Sigmoid colon (tissue), 7 donors: ENCODE measurements at regions of chr1 and their contacts with region 1.

Region 1: GRCh38 chr1:182084487-182085316 is 23.2 kb upstream of the ZNF648 start:
- DNase-seq: peak; percentile 93
- H3K4me3 ChIP-seq: no peak overlapping the region
- H3K27ac ChIP-seq: peak overlapping the region in 2 of 4 donors; percentile 45 to 50
- H3K4me1 ChIP-seq: peaks cover 0 to 9% (median 3%) of the 10 kb centered on the region in 4 donors
- H3K27me3 ChIP-seq: no peaks in the 10 kb centered on the region
- CTCF ChIP-seq: peak; percentile 78 to 92 (median 90)
- EP300 ChIP-seq: no peak
- POLR2A ChIP-seq: no peak

Region 2: DNA sequence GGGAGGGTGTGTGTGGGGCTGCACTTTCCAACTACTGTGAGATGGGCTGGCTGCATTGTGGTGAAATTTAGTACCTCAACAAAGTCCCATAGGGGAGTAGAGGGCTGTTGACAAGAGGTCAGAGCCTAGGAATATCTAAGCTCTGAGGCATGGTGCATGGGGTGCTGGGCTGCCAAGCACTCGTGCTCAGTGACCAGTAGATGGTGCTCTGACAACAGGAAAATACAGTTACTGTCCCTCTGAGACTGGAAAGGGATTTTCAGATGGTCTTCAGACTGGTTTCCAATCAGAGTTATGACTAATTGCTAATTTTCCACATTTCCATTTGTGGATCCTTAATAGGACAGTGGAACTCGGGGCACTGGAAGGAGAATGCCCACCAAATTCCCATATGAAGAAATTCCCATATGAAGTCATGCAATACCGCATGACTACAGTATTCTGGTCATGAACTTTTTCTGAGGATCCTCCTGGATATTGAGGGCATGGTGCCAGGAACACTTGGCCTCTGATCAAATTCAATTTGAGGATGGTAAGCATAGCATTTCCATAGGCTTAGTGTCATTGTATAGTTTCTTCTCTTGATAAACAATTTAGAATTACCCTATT is 605.5 kb before region 1 on chr1:
- intact Hi-C with region 1: loop called (anchors 10 kb)
- DNase-seq: no peak
- H3K4me3 ChIP-seq: no peak overlapping the region
- H3K27ac ChIP-seq: no peak overlapping the region
- H3K4me1 ChIP-seq: peaks cover 0 to 23% (median 16%) of the 10 kb centered on the region in 4 donors
- H3K27me3 ChIP-seq: peaks cover 8 to 38% (median 31%) of the 10 kb centered on the region in 3 donors
- CTCF ChIP-seq: peak; percentile 22 to 74 (median 52)
- EP300 ChIP-seq: no peak
- POLR2A ChIP-seq: no peak

Region 3: DNA sequence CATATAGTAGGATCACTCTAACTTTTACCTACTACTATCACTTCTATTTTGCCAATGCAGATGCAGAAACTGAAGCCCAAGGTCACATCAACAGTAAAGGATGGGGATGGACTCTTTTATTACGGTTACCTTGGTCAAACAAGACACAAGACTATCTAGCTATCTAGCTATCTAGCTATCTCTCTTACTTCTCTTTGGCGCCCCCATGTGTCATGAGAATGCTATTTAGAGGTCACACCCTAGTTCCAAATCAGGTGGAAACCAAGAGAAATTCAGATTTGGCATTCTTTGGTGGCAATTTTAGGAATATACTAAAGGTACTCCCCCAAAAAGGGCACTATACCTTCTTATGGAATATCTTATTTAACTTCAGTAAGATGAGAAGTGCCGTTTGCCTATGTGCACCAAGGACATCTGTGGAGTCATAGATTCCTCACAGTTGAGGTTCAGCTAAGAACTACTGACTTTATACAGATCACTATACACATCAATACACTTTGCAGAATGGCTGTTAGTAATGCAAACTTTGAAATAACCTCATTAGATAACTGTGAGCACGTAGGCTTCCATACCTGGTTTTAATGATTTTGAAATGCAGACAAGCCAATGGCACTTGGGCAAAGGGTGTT is 29.9 kb before region 1 on chr1:
- intact Hi-C with region 1: no loop called
- DNase-seq: no peak
- H3K4me3 ChIP-seq: no peak overlapping the region
- H3K27ac ChIP-seq: no peak overlapping the region
- H3K4me1 ChIP-seq: no peaks in the 10 kb centered on the region
- H3K27me3 ChIP-seq: peaks cover 0 to 24% (median 7%) of the 10 kb centered on the region in 3 donors
- CTCF ChIP-seq: peak in 2 of 4 experiments; percentile 16 to 35
- EP300 ChIP-seq: no peak
- POLR2A ChIP-seq: no peak

Region 4: DNA sequence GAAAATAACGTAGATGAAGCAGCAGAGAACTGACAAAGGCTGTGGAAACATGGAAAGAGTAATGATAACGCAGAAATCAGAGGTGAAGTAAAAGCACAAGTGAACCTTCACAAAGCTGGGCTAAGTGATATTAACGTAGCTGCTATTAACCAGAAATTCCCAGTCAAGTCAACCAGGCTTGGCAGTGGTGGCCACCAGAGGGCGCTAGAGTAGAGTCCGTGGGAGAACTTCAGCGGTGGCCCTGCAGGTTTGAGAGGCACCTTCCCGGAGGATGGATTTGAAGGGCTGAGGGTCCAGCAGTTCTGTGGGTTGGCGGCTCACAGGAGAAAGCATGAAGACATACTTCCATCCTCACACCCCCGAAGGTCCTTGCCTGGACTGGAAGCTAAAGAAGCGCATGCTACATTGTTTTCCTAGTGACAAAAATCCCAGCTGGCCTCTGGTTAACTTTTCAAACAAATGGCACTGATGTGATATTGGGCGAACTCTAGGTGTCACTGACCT is 58.5 kb after region 1 on chr1:
- intact Hi-C with region 1: loop called (anchors 2 kb)
- DNase-seq: peak; percentile 96
- H3K4me3 ChIP-seq: no peak overlapping the region
- H3K27ac ChIP-seq: peak overlapping the region; percentile 90 to 94 (median 93)
- H3K4me1 ChIP-seq: peaks cover 0 to 30% (median 27%) of the 10 kb centered on the region in 4 donors
- H3K27me3 ChIP-seq: no peaks in the 10 kb centered on the region
- CTCF ChIP-seq: peak; percentile 86 to 97 (median 95)
- EP300 ChIP-seq: no peak
- POLR2A ChIP-seq: no peak

Region 5: GRCh38 chr1:182549346-182549745 is 464.6 kb after region 1 on chr1:
- intact Hi-C with region 1: no loop called
- DNase-seq: no peak
- H3K4me3 ChIP-seq: no peak overlapping the region
- H3K27ac ChIP-seq: no peak overlapping the region
- H3K4me1 ChIP-seq: no peaks in the 10 kb centered on the region
- H3K27me3 ChIP-seq: no peaks in the 10 kb centered on the region
- CTCF ChIP-seq: no peak
- EP300 ChIP-seq: no peak
- POLR2A ChIP-seq: no peak

Region 6: GRCh38 chr1:182588500-182589452 is 504.1 kb after region 1 on chr1 and contains the start of gene RNASEL:
- intact Hi-C with region 1: loop called (anchors 5 kb)
- DNase-seq: peak; percentile 90
- H3K4me3 ChIP-seq: peak within 1 kb of the TSS; percentile 43 to 73 (median 68)
- H3K27ac ChIP-seq: peak within 1 kb of the TSS; percentile 87 to 92 (median 89)
- H3K4me1 ChIP-seq: peaks cover 0 to 25% (median 17%) of the 10 kb centered on the region in 4 donors
- H3K27me3 ChIP-seq: no peaks in the 10 kb centered on the region
- CTCF ChIP-seq: no peak
- EP300 ChIP-seq: no peak
- POLR2A ChIP-seq: peak in 1 of 2 donors; percentile 29
- total RNA-seq, gene RNASEL: 6.2 to 10.0 (median 7.5) TPM

Region 7: GRCh38 chr1:182781841-182782586 is 697.3 kb after region 1 on chr1:
- intact Hi-C with region 1: loop called (anchors 5 kb)
- DNase-seq: peak; percentile 86
- H3K4me3 ChIP-seq: no peak overlapping the region
- H3K27ac ChIP-seq: no peak overlapping the region
- H3K4me1 ChIP-seq: no peaks in the 10 kb centered on the region
- H3K27me3 ChIP-seq: no peaks in the 10 kb centered on the region
- CTCF ChIP-seq: peak in 3 of 4 experiments; percentile 27 to 50 (median 41)
- EP300 ChIP-seq: no peak
- POLR2A ChIP-seq: no peak